ENCODE measurements at regions of chr17 and their contacts with region 1.

Region 1: GRCh38 chr17:2029911-2030778 is at the start of gene DPH1:
- DNase-seq: peak; percentile 96
- H3K4me3 ChIP-seq: peak within 1 kb of the TSS; percentile 79 to 100 (median 100)
- H3K27ac ChIP-seq: peak within 1 kb of the TSS in 7 of 8 donors; percentile 61 to 83 (median 77)
- H3K4me1 ChIP-seq: peaks cover 20 to 72% (median 47%) of the 10 kb centered on the region in 6 donors
- H3K27me3 ChIP-seq: peaks cover 2 to 48% (median 14%) of the 10 kb centered on the region in 7 donors
- CTCF ChIP-seq: peak in 2 of 11 experiments; percentile 55 to 61
- POLR2A ChIP-seq: peak in 1 of 3 donors; percentile 55
- total RNA-seq, gene DPH1: 38.3 to 58.5 (median 43.5) TPM

Region 2: DNA sequence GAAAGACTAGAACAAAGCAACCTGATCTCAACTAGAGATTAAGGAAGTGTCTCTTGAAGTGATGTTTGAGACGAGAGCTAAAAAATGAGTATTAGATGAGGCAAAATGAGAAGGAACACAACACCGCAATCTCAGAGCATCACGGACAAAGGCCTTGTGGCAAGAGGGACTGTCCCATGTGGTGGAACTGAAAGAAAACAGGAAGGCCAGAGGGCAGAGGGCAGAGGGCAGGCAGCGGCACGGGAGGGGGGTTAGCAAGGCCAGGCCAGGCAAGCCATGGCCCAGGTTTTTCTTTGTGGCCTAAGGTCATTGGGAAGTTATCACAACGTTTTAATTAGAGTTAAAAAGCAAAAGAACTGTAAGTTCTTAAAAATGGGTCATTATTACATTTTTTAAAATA is 177.8 kb before region 1 on chr17:
- intact Hi-C with region 1: no loop called
- DNase-seq: no peak
- H3K4me3 ChIP-seq: no peak overlapping the region
- H3K27ac ChIP-seq: peak overlapping the region in 2 of 8 donors; percentile 5 to 30
- H3K4me1 ChIP-seq: peaks cover 0 to 9% (median 3%) of the 10 kb centered on the region in 6 donors
- H3K27me3 ChIP-seq: no peaks in the 10 kb centered on the region
- CTCF ChIP-seq: no peak
- POLR2A ChIP-seq: no peak

Region 3: DNA sequence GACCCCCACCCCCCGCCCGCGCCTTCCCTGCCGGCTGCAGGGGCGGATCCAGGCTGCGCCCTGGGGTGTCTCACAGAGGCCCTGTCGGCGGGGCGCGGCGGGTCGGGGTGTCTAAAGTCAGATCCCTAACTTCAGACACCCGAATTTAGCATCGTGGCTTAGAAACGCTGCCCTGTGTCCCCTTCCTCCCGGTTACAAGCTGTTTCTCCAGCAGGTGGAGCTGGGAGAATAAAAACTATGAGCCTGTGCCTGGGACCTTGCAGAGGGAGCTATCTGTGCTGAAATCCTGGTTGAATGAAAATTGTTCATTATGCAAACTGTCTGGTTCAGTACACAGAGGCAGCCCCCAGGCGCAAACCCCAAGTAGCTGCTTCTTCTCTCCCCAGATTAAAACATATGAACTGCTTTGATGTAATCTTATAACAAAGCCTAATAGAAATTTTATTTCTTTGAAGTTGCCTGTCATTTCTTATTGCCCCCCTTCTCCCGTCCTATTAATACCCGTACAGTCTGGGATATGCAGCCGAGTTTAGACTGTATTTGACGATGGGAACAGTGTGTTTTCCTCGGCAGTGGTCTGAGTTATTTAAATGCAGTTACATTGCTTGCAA is 121.3 kb before region 1 on chr17:
- intact Hi-C with region 1: loop called (anchors 5 kb)
- DNase-seq: no peak
- H3K4me3 ChIP-seq: peak overlapping the region in 6 of 8 donors; percentile 8 to 58 (median 26)
- H3K27ac ChIP-seq: no peak overlapping the region
- H3K4me1 ChIP-seq: peaks cover 10 to 23% (median 14%) of the 10 kb centered on the region in 6 donors
- H3K27me3 ChIP-seq: peaks cover 0 to 96% (median 40%) of the 10 kb centered on the region in 7 donors
- CTCF ChIP-seq: peak in 10 of 11 experiments; percentile 8 to 80 (median 66)
- POLR2A ChIP-seq: no peak

Region 4: GRCh38 chr17:2724778-2725164 is 694.6 kb after region 1 on chr17:
- intact Hi-C with region 1: no loop called
- DNase-seq: no peak
- H3K4me3 ChIP-seq: peak overlapping the region in 6 of 8 donors; percentile 13 to 68 (median 34)
- H3K27ac ChIP-seq: no peak overlapping the region
- H3K4me1 ChIP-seq: peaks cover 0 to 20% (median 13%) of the 10 kb centered on the region in 6 donors
- H3K27me3 ChIP-seq: peaks cover 0 to 64% (median 28%) of the 10 kb centered on the region in 7 donors
- CTCF ChIP-seq: peak in 2 of 11 experiments; percentile 13 to 16
- POLR2A ChIP-seq: no peak

Measured in spleen (tissue), 13 donors.